ENCODE measurements at regions of chr11 and their contacts with region 1.

Region 1: DNA sequence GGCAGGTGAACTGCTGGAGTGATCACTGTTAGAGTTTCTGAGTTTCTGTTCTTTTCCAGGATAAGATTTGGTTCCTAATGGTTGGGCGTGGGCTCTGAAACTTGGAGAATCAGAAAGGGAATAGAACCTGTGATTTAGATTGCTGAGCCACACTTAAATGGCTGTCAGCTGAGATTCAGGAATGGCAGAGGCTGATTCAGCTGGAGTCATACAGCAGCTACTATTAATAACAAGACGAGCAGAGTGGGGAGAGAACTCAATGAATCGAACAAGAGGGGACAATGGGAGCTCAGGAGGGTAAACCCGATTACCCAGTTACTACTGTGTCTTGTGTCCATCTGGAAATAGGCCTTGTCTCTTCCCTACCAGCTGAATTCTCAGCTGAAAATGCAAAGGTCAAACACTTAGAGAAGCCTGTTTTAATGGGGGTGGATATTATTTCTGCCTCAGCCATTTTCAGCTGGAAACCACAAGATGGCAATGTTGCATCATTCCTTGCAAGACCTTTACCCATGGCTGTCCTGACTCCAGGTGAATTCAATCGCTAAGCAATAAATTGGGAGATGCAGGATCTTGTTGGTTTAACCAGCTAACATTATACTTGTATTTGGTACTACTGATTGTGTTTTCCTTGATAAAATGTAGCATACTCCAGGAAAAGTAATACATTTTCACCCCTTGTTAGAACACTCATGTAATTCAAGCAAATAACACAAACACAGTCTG is 104.5 kb upstream of the RAG2 start:
- DNase-seq: no peak
- H3K4me3 ChIP-seq: no peak overlapping the region
- H3K27ac ChIP-seq: no peak overlapping the region
- H3K4me1 ChIP-seq: no peaks in the 10 kb centered on the region
- H3K27me3 ChIP-seq: no peaks in the 10 kb centered on the region
- CTCF ChIP-seq: peak; percentile 67 to 77

Region 2: GRCh38 chr11:36746886-36747710 is 44.6 kb after region 1 on chr11:
- intact Hi-C with region 1: loop called (anchors 1 kb)
- DNase-seq: peak; percentile 88 to 90
- H3K4me3 ChIP-seq: no peak overlapping the region
- H3K27ac ChIP-seq: no peak overlapping the region
- H3K4me1 ChIP-seq: peaks cover 0 to 12% (median 4%) of the 10 kb centered on the region in 4 donors
- H3K27me3 ChIP-seq: peaks cover 0 to 10% of the 10 kb centered on the region in 2 donors
- CTCF ChIP-seq: peak; percentile 95 to 99

Measured in tibial artery (tissue), 4 donors.